ENCODE measurements at regions of chr7 and their contacts with region 1.

Region 1: GRCh38 chr7:91089382-91089963 is 174.8 kb upstream of the FZD1 start:
- H3K4me3 Mint-ChIP-seq: peak overlapping the region; percentile 26
- H3K27ac Mint-ChIP-seq: no peak overlapping the region
- H3K4me1 Mint-ChIP-seq: no peaks in the 10 kb centered on the region
- H3K27me3 Mint-ChIP-seq: no peaks in the 10 kb centered on the region

Region 2: DNA sequence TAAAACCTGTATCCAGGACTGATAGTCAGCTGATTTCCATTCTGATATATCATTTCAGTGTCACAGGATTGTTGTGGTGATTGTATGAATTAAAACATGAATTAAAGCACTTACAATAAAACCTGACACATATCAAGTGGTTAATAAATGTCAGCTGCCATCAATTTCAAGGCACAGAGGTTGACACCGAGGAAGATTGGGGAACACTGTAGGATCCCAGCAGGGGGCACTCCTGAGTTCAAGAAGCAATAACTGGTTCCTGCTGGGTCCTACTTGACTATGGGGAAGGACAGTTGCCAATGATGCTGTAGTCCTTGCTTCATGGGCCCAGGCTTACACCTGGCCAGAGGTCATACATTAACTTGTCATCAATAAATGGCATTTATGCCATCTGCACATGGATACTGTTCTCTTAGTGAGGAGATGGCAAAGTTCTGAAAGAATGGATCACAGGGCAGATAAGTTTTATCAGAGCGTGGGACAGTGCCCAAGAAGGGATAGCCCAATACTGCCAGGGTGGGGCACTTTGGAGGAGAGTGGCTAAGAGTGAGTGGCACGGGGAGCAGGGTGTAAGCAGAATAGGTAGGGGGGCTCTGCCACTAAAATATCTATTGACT is 198.8 kb after region 1 on chr7:
- intact Hi-C with region 1: loop called (anchors 10 kb)
- H3K4me3 Mint-ChIP-seq: no peak overlapping the region
- H3K27ac Mint-ChIP-seq: no peak overlapping the region
- H3K4me1 Mint-ChIP-seq: peaks cover 47% of the 10 kb centered on the region
- H3K27me3 Mint-ChIP-seq: no peaks in the 10 kb centered on the region

Region 3: DNA sequence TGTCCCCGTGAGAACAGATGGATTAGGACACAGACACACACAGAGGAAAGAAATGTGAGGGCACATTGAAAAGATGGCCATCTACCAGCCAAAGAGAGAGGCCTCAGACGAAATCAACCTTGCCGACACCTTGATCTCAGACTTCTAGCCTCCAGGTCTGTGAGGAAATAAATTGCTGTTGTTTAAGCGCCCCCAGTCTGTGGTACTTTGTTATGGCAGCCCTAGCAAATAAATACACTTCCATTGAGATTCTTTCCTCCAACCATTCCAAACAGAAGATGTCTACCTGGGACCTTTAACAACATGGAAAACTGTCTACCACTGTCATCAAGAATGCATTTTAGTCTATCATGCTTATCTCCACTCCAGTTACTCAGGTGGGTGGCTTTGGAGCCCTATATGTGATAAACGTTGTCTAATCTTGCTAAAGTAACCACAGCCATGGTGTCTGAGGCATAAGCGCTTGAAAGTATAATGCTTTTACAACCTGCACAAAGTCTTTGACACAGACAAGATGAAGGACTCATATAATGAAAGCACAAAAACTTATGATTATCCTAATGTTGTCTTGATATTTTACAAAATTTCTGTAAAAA is 546.8 kb after region 1 on chr7:
- intact Hi-C with region 1: loop called (anchors 1 kb)
- H3K4me3 Mint-ChIP-seq: no peak overlapping the region
- H3K27ac Mint-ChIP-seq: no peak overlapping the region
- H3K4me1 Mint-ChIP-seq: no peaks in the 10 kb centered on the region
- H3K27me3 Mint-ChIP-seq: peaks cover 3% of the 10 kb centered on the region

Region 4: GRCh38 chr7:91784463-91784862 is 695.0 kb after region 1 on chr7:
- intact Hi-C with region 1: loop called (anchors 5 kb)
- H3K4me3 Mint-ChIP-seq: no peak overlapping the region
- H3K27ac Mint-ChIP-seq: no peak overlapping the region
- H3K4me1 Mint-ChIP-seq: no peaks in the 10 kb centered on the region
- H3K27me3 Mint-ChIP-seq: no peaks in the 10 kb centered on the region

Region 5: GRCh38 chr7:91880413-91881241 is 791.2 kb after region 1 on chr7 and contains the start of gene MTERF1:
- intact Hi-C with region 1: loop called (anchors 10 kb)
- H3K4me3 Mint-ChIP-seq: peak within 1 kb of the TSS; percentile 93
- H3K27ac Mint-ChIP-seq: peak within 1 kb of the TSS; percentile 79
- H3K4me1 Mint-ChIP-seq: peaks cover 20% of the 10 kb centered on the region
- H3K27me3 Mint-ChIP-seq: peaks cover 2% of the 10 kb centered on the region